ENCODE measurements at regions of chr2 and their contacts with region 1.

Region 1: GRCh38 chr2:61328707-61329251 is 142.1 kb downstream of the USP34 start:
- DNase-seq: no peak
- H3K4me3 Mint-ChIP-seq: peak overlapping the region; percentile 64
- H3K27ac Mint-ChIP-seq: peak overlapping the region; percentile 95
- H3K4me1 Mint-ChIP-seq: peaks cover 28% of the 10 kb centered on the region
- H3K27me3 Mint-ChIP-seq: no peaks in the 10 kb centered on the region

Region 2: DNA sequence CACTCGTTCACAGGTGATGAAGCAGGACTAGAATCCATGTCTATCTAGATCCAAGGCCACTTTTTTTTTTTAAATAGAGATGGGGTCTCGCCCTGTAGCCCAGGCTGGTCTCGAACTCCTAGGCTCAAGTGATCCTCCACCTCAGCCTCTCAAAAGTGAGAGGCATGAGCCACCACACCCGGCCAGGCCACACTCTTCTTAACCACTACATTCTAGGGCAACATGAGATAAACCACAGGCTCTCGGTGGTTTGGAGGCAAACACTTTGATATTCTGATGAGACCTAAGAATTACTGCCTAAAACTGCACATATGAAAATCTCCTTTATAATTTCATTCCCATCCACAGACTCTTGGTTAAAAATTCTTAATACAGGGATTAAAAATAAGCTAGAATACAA is 90.3 kb after region 1 on chr2:
- intact Hi-C with region 1: loop called (anchors 1 kb)
- DNase-seq: no peak
- H3K4me3 Mint-ChIP-seq: no peak overlapping the region
- H3K27ac Mint-ChIP-seq: no peak overlapping the region
- H3K4me1 Mint-ChIP-seq: peaks cover 26% of the 10 kb centered on the region
- H3K27me3 Mint-ChIP-seq: no peaks in the 10 kb centered on the region